ENCODE measurements at regions of chr2 and their contacts with region 1.

Region 1: DNA sequence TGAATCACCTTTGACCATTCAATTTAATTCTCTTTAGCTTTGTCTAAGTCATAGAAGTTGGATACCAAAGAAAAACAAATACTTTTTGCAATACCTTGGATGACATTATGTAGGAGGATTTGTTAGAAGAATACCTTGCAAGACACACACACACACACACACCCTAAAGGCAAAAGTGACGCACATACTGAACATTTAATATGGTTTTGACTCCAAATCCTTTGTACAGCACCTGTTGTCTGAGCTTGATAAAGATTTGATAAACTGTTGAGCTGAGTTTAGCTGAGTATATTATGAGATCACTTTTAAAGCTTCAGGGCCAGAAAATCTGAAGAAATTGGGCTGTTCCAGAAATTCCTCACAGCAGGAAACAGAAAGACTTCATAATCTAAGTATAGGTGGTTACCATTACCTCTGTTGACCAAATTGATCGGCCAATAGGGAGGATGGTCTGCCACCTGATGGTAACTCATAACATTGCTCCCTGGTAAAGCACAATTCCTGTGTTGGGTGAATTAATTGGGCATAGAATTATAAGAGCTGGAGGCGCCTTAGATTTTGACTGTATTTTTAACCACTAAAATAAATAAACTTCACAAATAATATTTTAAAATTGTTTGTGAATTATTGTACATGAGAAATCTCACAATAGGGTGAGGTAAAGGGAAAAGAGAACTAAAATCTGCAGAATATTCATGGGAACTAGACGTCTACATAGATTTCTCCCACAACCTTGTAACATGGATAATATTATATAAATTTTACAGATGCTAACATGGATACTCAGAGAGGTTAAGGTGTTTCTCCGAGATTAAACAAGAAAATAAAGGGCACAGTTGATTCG is 21.9 kb upstream of the RPIA start:
- DNase-seq: peak; percentile 80
- ATAC-seq: peak; percentile 60
- H3K4me3 ChIP-seq: no peak overlapping the region
- H3K27ac ChIP-seq: peak overlapping the region; percentile 69
- H3K4me1 ChIP-seq: peaks cover 20% of the 10 kb centered on the region
- H3K27me3 ChIP-seq: no peaks in the 10 kb centered on the region
- CTCF ChIP-seq: peak; percentile 90

Region 2: DNA sequence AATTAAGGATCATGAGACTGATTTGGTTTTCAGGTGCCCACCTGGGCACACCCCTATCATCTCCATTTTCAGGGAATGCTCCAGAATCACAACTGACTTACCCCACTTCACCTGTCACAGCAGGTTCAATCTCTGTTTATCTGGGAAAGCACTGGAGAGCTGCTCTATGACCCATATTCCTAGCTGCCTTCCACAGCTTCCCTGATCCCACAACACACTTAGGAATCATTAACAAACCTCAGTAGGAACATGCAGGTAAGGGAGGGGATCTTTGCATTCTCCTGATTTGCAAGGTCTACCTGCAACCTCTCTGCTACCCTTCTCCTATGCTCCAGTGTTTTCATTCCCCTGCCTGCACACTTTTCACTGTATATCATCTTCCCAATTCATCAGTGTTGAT is 523.0 kb before region 1 on chr2:
- CTCF ChIA-PET with region 1: interaction called, 11 read pairs
- POLR2A ChIA-PET with region 1: no interaction called
- intact Hi-C with region 1: no loop called
- DNase-seq: no peak
- ATAC-seq: no peak
- H3K4me3 ChIP-seq: no peak overlapping the region
- H3K27ac ChIP-seq: no peak overlapping the region
- H3K4me1 ChIP-seq: no peaks in the 10 kb centered on the region
- H3K27me3 ChIP-seq: peaks cover 32% of the 10 kb centered on the region
- CTCF ChIP-seq: no peak

Region 3: GRCh38 chr2:88190808-88191721 is 478.5 kb before region 1 on chr2:
- CTCF ChIA-PET with region 1: no interaction called
- POLR2A ChIA-PET with region 1: no interaction called
- intact Hi-C with region 1: loop called (anchors 5 kb)
- DNase-seq: peak; percentile 52
- ATAC-seq: peak; percentile 23; the same call in 1 of the 2 replicates
- H3K4me3 ChIP-seq: no peak overlapping the region
- H3K27ac ChIP-seq: no peak overlapping the region
- H3K4me1 ChIP-seq: no peaks in the 10 kb centered on the region
- H3K27me3 ChIP-seq: 0 out of 2 replicates have a peak, but pooled peaks cover 9% of the 10 kb centered on the region
- CTCF ChIP-seq: peak; percentile 64

Region 4: DNA sequence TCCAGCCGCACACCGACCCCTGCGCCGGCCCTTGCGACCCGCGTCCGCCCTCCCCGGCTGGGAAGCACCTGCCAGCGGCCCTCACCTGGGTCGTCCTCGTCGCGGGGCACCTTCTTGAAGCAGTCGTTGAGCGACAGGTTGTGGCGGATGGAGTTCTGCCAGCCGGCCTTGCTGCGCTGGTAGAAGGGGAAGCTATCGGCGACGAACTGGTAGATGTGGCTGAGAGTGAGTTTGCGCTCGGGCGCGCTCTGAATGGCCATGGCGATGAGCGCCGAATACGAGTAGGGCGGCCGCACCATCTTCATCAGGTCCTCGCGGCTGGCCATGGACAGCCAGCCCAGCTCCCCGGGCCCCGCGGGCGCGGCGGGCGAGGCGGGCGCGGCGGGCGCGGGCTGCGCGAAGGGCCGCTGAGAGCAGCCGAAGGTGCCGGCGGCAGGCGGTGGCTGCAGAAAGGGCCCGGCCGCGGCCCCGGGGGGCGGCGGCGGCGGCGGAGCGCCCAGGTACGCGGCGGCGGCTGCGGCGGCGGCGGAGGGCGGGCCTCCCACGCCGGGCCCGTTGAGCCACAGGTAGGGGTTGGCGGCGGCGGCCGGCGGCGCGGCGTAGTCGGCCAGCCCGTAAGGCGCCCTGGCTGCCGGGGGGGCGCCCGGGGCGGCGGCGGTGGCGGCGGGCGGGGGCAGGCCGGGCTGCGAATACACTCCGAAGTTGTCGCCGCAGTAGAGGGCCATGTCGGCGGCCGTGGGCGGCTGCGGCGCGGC is 217.6 kb before region 1 on chr2:
- CTCF ChIA-PET with region 1: no interaction called
- POLR2A ChIA-PET with region 1: no interaction called
- intact Hi-C with region 1: no loop called
- DNase-seq: no peak
- ATAC-seq: no peak
- H3K4me3 ChIP-seq: no peak overlapping the region
- H3K27ac ChIP-seq: no peak overlapping the region
- H3K4me1 ChIP-seq: no peaks in the 10 kb centered on the region
- H3K27me3 ChIP-seq: peaks cover 58% of the 10 kb centered on the region
- CTCF ChIP-seq: no peak

Region 5: GRCh38 chr2:88545121-88545520 is 124.5 kb before region 1 on chr2:
- CTCF ChIA-PET with region 1: no interaction called
- POLR2A ChIA-PET with region 1: no interaction called
- intact Hi-C with region 1: no loop called
- DNase-seq: peak; percentile 70
- ATAC-seq: peak; percentile 76
- H3K4me3 ChIP-seq: no peak overlapping the region
- H3K27ac ChIP-seq: no peak overlapping the region
- H3K4me1 ChIP-seq: no peaks in the 10 kb centered on the region
- H3K27me3 ChIP-seq: no peaks in the 10 kb centered on the region
- CTCF ChIP-seq: no peak

Region 6: GRCh38 chr2:88590998-88591613 is 78.5 kb before region 1 on chr2:
- CTCF ChIA-PET with region 1: interaction called, 10 read pairs
- POLR2A ChIA-PET with region 1: no interaction called
- intact Hi-C with region 1: loop called (anchors 1 kb)
- DNase-seq: peak; percentile 82
- ATAC-seq: peak; percentile 84
- H3K4me3 ChIP-seq: no peak overlapping the region
- H3K27ac ChIP-seq: no peak overlapping the region
- H3K4me1 ChIP-seq: no peaks in the 10 kb centered on the region
- H3K27me3 ChIP-seq: no peaks in the 10 kb centered on the region
- CTCF ChIP-seq: peak; percentile 93

Region 7: GRCh38 chr2:88627056-88627855 is 42.3 kb before region 1 on chr2 and contains the start of gene EIF2AK3:
- CTCF ChIA-PET with region 1: interaction called, 4 read pairs
- POLR2A ChIA-PET with region 1: no interaction called
- intact Hi-C with region 1: loop called (anchors 1 kb)
- DNase-seq: peak; percentile 100
- ATAC-seq: peak; percentile 85
- H3K4me3 ChIP-seq: peak within 1 kb of the TSS; percentile 74
- H3K27ac ChIP-seq: peak within 1 kb of the TSS; percentile 88
- H3K4me1 ChIP-seq: peaks cover 22% of the 10 kb centered on the region
- H3K27me3 ChIP-seq: no peaks in the 10 kb centered on the region
- CTCF ChIP-seq: no peak
- total RNA-seq, gene EIF2AK3: 10.7 and 16.2 TPM in 2 replicates

Region 8: DNA sequence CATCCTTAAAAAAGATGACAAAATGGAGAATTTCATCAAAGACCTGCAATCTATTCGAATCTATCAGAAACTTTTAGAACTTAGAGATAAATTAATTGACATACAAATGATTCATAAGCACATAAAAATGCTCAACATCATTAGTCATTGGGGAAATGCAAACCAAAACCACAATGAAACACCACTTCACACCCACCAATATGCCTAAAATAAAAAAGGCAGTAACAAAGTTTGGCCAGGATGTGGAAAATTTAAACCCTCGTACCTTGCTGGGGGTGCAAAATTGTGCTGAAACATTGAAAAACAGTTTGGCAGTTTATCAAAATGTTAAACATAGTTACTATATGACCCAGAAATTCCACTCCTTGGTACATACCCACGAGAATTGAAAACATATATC is 30.9 kb before region 1 on chr2:
- CTCF ChIA-PET with region 1: interaction called, 4 read pairs
- POLR2A ChIA-PET with region 1: interaction called, 4 read pairs
- intact Hi-C with region 1: loop called (anchors 1 kb)
- DNase-seq: peak; percentile 80
- ATAC-seq: peak; percentile 80
- H3K4me3 ChIP-seq: no peak overlapping the region
- H3K27ac ChIP-seq: peak overlapping the region; percentile 8
- H3K4me1 ChIP-seq: peaks cover 21% of the 10 kb centered on the region
- H3K27me3 ChIP-seq: no peaks in the 10 kb centered on the region
- CTCF ChIP-seq: no peak